Activated CD4-positive, alpha-beta T cell treated with anti-CD3 and anti-CD28 coated beads, Interleukin-2, amount 10 ng/mL, durations not matched to agents 24 days and 14 days (primary cell): ENCODE measurements at regions of chr12 and their contacts with region 1.

Region 1: DNA sequence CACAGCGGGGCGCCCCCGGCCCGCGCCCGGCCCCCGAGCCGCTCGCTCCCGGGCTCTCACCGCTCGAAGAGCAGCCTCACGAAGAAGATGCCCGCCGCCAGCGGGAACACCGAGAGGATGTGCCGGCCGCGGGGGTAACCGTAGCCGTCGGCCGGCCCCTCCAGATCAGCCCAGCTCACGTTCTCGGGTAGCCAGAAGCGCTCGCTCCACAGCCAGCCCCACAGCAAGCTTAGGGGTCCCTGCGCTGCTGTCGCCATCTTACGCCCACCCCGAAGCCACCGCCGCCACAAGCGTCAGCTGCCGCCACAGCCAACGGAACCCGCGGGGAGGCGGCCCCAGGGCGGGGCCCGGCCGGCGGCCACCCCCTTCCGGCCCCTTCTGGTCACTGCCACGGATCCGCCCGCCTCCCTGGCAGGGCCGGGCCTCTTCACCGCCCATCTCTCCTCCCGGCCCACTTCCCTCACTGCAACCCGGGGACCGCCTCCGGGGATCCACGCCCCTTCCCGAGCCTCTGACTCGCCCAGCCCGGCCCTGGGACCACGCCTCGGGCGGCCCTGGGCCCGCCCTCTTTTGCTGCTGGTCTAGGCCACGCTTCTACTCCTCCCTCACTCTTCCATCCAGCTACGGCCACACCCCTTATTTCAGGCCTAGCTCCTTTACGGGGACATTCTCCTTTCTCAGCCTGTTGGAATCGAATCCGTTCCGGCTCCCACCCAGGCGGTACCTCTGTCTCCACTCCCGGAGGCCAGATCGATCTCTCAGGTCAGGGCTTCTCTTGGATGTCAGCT is at the start of gene CERS5:
- DNase-seq: peak; percentile 100
- H3K4me3 Mint-ChIP-seq: peak within 1 kb of the TSS; percentile 86
- H3K27ac Mint-ChIP-seq: peak within 1 kb of the TSS; percentile 95
- H3K4me1 Mint-ChIP-seq: peaks cover 33% of the 10 kb centered on the region
- H3K27me3 Mint-ChIP-seq: no peaks in the 10 kb centered on the region
- total RNA-seq, gene CERS5: 62.6 and 66.5 TPM in 2 replicates

Region 2: GRCh38 chr12:50084775-50085614 is 82.2 kb before region 1 on chr12 and contains the start of gene SMARCD1:
- intact Hi-C with region 1: loop called (anchors 2 kb)
- DNase-seq: peak; percentile 94
- H3K4me3 Mint-ChIP-seq: peak within 1 kb of the TSS; percentile 93
- H3K27ac Mint-ChIP-seq: peak within 1 kb of the TSS; percentile 95
- H3K4me1 Mint-ChIP-seq: peaks cover 30% of the 10 kb centered on the region
- H3K27me3 Mint-ChIP-seq: no peaks in the 10 kb centered on the region
- total RNA-seq, gene SMARCD1: 73.1 and 82.5 TPM in 2 replicates

Region 3: GRCh38 chr12:50111693-50112455 is 55.4 kb before region 1 on chr12 and contains the start of gene COX14:
- intact Hi-C with region 1: loop called (anchors 1 kb)
- DNase-seq: peak; percentile 100
- H3K4me3 Mint-ChIP-seq: peak within 1 kb of the TSS; percentile 95
- H3K27ac Mint-ChIP-seq: peak within 1 kb of the TSS; percentile 96
- H3K4me1 Mint-ChIP-seq: peaks cover 32% of the 10 kb centered on the region
- H3K27me3 Mint-ChIP-seq: no peaks in the 10 kb centered on the region
- total RNA-seq, gene COX14: 44.0 and 45.0 TPM in 2 replicates

Region 4: GRCh38 chr12:50187084-50187900 is 20.1 kb after region 1 on chr12:
- intact Hi-C with region 1: loop called (anchors 1 kb)
- DNase-seq: peak; percentile 74
- H3K4me3 Mint-ChIP-seq: peak overlapping the region; percentile 72
- H3K27ac Mint-ChIP-seq: peak overlapping the region; percentile 95
- H3K4me1 Mint-ChIP-seq: peaks cover 54% of the 10 kb centered on the region
- H3K27me3 Mint-ChIP-seq: no peaks in the 10 kb centered on the region

Region 5: DNA sequence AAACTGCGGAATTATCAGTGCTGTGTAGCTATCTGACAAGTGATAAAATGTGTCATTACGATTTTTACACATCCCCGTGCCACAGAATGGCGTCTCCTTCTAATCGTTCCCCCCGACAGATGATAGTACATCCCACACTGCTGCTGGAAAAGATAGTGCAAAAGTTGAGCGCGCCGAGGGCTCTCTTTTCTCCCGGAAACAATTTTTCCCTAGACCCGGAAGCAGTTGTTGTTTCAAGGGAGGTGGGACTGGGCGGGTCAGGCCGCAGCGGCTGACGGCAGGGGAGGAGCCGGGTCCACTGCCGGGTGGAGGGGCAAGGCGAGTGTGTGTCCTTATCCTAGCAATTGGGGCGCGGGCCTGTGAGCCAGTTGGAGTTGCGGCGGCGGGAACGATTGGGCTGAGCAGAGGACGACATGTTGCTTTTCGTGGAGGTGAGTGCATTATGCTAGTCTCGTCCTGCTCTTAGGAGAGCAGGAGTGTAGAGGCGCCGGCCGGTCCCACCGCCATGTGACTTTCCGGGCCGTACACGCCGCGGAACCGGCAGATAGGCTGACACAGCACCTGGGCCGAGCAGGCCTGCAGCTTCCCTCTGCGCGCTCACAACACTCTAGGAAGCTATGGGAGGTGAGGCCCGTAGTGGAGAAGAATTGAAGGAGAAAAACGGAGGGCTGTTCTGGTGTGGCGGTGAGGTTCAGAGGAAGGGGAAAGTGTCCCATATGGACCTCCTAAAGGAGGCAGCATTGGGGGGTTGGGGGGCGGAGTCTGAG is 233.5 kb after region 1 on chr12 and contains the start of gene LARP4:
- intact Hi-C with region 1: loop called (anchors 5 kb)
- DNase-seq: peak; percentile 98
- H3K4me3 Mint-ChIP-seq: peak within 1 kb of the TSS; percentile 99
- H3K27ac Mint-ChIP-seq: peak within 1 kb of the TSS; percentile 97
- H3K4me1 Mint-ChIP-seq: peaks cover 12% of the 10 kb centered on the region
- H3K27me3 Mint-ChIP-seq: peaks cover 6% of the 10 kb centered on the region
- total RNA-seq, gene LARP4: 117 and 130 TPM in 2 replicates